Right cardiac atrium (tissue), 5 donors: ENCODE measurements at regions of chrX and their contacts with region 1.

Region 1: GRCh38 chrX:17374619-17375366 is at the start of gene NHS:
- DNase-seq: peak; percentile 72 to 89 (median 88)
- ATAC-seq: peak; percentile 91 to 94
- H3K4me3 ChIP-seq: peak within 1 kb of the TSS; percentile 66
- H3K27ac ChIP-seq: no peak within 1 kb of the TSS
- H3K4me1 ChIP-seq: no peaks in the 10 kb centered on the region
- H3K27me3 ChIP-seq: no peaks in the 10 kb centered on the region
- total RNA-seq, gene NHS: 1.2 to 1.7 (median 1.6) TPM

Region 2: GRCh38 chrX:17323376-17323775 is 51.4 kb before region 1 on chrX:
- intact Hi-C with region 1: no loop called
- DNase-seq: no peak
- ATAC-seq: no peak
- H3K4me3 ChIP-seq: no peak overlapping the region
- H3K27ac ChIP-seq: no peak overlapping the region
- H3K4me1 ChIP-seq: no peaks in the 10 kb centered on the region
- H3K27me3 ChIP-seq: no peaks in the 10 kb centered on the region

Region 3: GRCh38 chrX:17521871-17522693 is 147.3 kb after region 1 on chrX:
- intact Hi-C with region 1: loop called in 1 of 4 experiments (anchors 10 kb)
- DNase-seq: peak in 2 of 3 donors; percentile 25 to 42
- ATAC-seq: peak in 1 of 2 donors; percentile 57
- H3K4me3 ChIP-seq: no peak overlapping the region
- H3K27ac ChIP-seq: no peak overlapping the region
- H3K4me1 ChIP-seq: peaks cover 3% of the 10 kb centered on the region
- H3K27me3 ChIP-seq: no peaks in the 10 kb centered on the region

Region 4: GRCh38 chrX:17805120-17805519 is 430.3 kb after region 1 on chrX:
- intact Hi-C with region 1: no loop called
- DNase-seq: no peak
- ATAC-seq: no peak
- H3K4me3 ChIP-seq: no peak overlapping the region
- H3K27ac ChIP-seq: no peak overlapping the region
- H3K4me1 ChIP-seq: peaks cover 2% of the 10 kb centered on the region
- H3K27me3 ChIP-seq: no peaks in the 10 kb centered on the region